Motor neuron (in vitro differentiated cells): ENCODE measurements at regions of chr1 and their contacts with region 1.

Region 1: GRCh38 chr1:234114648-234115307 is 210.3 kb downstream of the SLC35F3 start:
- ATAC-seq: peak; percentile 38 to 76 (median 54)
- H3K4me3 ChIP-seq: no peak overlapping the region
- H3K27ac ChIP-seq: no peak overlapping the region
- H3K4me1 ChIP-seq: peaks cover 5 to 7% of the 10 kb centered on the region in 2 donors

Region 2: DNA sequence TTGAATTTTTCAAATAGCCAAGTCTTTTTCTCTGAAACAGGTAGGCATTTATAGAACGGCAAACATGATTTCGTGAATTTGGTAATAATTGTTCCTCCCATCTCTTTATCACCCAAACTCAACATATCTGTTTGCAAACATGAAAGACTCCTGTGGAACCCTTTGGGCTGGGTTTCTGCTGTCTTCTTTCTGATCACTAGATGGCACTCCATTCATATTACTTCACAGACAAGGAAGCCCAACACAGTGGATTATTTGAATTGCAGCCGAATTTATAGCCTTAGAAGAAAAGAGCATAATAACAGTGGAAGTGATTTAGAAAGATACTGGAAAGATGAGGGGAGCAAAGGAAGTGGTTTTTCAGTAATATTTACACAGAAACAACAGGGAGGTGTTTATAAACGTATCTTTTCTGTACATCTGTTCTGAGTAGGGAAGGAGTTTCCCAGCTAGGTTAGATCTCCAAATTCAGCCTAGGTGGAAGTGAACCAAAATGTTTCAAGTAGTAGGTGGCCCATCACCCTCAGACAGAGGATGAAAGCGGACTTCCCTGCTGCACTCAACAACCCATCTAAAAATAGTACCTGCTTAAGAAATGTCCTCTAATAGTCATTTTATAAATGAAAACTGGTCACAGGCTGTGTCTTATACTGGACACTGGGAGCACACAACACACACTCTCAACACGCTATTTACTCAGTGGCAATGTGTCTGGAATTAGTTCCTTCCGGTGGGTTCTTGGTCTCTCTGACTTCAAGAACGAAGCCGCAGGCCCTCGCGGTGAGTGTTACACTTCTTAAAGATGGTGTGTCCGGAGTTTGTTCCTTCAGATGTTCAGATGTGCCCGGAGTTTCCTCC is 719.7 kb before region 1 on chr1:
- in situ Hi-C with region 1: loop called in 1 of 9 experiments (anchors 25 kb)
- ATAC-seq: peak; percentile 64 to 91 (median 78)
- H3K4me3 ChIP-seq: no peak overlapping the region
- H3K27ac ChIP-seq: no peak overlapping the region
- H3K4me1 ChIP-seq: no peaks in the 10 kb centered on the region

Region 3: DNA sequence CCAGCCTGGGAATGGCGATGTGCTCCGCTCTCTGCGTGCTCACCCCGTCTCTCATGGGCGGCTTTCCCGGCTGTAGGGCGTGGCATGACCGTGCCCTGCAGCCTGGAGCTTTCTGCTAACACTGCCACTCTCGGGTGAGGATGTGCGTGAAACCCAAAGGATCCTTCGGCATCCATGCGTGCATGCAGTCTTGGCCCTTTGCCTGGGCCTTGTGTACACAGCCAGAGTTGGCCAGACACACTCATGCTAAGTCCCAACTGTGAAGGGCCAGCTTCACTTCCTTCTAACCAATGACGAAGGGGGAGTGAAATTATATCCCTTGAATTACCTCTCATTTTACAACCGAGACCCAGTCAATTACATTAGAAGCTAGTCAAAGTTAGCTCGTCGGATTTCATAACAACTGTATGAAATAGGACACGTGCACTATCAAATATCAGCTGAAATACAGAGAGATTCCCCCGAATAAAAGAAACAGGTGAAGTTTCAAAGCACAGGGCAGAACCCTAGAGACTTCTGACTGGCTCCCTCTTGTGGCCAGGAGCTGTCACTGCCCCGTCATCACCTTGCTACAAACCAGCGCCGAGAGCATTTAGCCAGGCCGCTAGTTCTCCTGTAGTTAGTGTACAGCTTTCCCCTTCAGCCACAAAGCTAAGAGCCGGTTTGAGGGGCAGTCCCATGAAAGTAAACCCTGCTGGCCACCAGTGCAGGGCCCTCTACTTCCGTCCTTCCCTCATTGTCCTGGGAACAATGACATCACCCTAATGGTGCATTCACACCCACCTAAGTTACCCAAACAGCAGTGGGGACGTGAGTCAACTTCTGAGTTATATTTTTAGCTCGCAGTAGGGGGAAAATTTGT is 195.1 kb after region 1 on chr1:
- in situ Hi-C with region 1: loop called in 2 of 9 experiments (anchors 25 kb)
- ATAC-seq: peak; percentile 65 to 95 (median 86)
- H3K4me3 ChIP-seq: no peak overlapping the region
- H3K27ac ChIP-seq: no peak overlapping the region
- H3K4me1 ChIP-seq: peaks cover 0 to 2% of the 10 kb centered on the region in 2 donors

Region 4: DNA sequence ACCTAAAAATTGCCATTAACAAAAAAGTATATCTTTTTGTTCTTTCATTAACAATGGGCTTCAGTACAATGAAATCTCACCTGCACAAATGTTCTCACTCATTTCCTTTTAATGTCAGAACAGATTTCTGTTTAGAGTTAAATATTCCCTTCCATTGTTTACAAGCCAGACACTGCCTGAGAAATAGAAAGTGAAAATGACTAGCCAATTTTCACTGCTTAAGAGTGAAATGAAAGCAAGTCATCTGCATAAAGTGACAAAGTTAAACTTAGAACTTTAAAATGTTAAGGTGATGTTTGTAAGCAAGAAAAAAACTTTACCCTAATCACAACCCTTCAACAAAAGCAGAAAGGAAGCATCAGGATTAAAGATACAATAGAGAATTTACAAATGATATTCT is 286.0 kb after region 1 on chr1:
- in situ Hi-C with region 1: loop called in 1 of 9 experiments (anchors 25 kb)
- ATAC-seq: peak in 3 of 8 experiments; percentile 30 to 77 (median 74)
- H3K4me3 ChIP-seq: no peak overlapping the region
- H3K27ac ChIP-seq: no peak overlapping the region
- H3K4me1 ChIP-seq: no peaks in the 10 kb centered on the region